CD8-positive, alpha-beta memory T cell (primary cell): ENCODE measurements at regions of chr3 and their contacts with region 1.

Region 1: DNA sequence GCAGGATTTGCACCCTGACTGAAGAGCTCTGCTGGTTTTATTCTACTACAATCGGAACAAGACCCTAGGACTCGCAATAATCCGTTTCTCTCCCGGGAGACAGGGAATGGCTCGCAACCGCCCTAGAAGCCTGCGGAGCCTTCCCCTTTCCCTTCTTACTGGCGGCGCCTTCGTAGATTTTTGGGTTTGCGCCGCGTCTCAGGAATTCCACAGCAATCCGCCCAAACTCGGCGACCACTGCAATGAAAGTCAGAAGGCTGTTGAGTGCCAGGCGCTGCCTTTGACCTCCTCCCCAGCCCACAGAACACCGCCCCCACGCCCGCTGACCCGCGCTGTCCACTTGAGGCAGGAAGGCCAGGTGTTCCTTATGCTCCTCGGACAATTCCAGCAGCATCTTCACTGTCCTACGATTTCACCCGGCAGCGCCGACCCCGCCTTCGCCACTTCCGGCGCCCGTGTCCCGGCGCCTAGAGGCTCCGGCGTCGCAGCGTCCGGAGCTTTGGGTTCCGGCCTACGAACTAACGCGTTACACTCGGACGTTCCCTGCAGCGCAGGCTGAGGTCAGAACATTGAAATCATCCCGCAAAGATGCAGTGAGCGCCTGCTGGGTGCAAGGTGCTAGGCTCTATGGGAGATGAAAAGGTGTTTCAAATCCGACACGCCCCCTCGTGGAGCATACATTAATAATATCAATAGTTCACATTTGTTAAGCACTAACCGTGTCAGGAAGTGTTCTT is at the start of gene COMMD2:
- DNase-seq: peak; percentile 56 to 75 (median 65)
- H3K4me3 ChIP-seq: peak within 1 kb of the TSS; percentile 75
- H3K4me3 Mint-ChIP-seq: peak within 1 kb of the TSS; percentile 92 to 100 (median 95)
- H3K27ac ChIP-seq: peak within 1 kb of the TSS; percentile 71
- H3K27ac Mint-ChIP-seq: peak within 1 kb of the TSS; percentile 93 to 99 (median 95)
- H3K4me1 ChIP-seq: peaks cover 21% of the 10 kb centered on the region
- H3K4me1 Mint-ChIP-seq: peaks cover 33 to 57% (median 46%) of the 10 kb centered on the region in 3 donors
- H3K27me3 ChIP-seq: no peaks in the 10 kb centered on the region
- H3K27me3 Mint-ChIP-seq: no peaks in the 10 kb centered on the region
- total RNA-seq, gene COMMD2: 42.4 to 48.4 TPM

Region 2: GRCh38 chr3:148344522-148344921 is 1407.7 kb before region 1 on chr3:
- CTCF ChIA-PET with region 1: no interaction called
- POLR2A ChIA-PET with region 1: no interaction called
- DNase-seq: no peak
- H3K4me3 ChIP-seq: no peak overlapping the region
- H3K4me3 Mint-ChIP-seq: no peak overlapping the region
- H3K27ac ChIP-seq: no peak overlapping the region
- H3K27ac Mint-ChIP-seq: no peak overlapping the region
- H3K4me1 ChIP-seq: no peaks in the 10 kb centered on the region
- H3K4me1 Mint-ChIP-seq: no peaks in the 10 kb centered on the region
- H3K27me3 ChIP-seq: no peaks in the 10 kb centered on the region
- H3K27me3 Mint-ChIP-seq: no peaks in the 10 kb centered on the region

Region 3: DNA sequence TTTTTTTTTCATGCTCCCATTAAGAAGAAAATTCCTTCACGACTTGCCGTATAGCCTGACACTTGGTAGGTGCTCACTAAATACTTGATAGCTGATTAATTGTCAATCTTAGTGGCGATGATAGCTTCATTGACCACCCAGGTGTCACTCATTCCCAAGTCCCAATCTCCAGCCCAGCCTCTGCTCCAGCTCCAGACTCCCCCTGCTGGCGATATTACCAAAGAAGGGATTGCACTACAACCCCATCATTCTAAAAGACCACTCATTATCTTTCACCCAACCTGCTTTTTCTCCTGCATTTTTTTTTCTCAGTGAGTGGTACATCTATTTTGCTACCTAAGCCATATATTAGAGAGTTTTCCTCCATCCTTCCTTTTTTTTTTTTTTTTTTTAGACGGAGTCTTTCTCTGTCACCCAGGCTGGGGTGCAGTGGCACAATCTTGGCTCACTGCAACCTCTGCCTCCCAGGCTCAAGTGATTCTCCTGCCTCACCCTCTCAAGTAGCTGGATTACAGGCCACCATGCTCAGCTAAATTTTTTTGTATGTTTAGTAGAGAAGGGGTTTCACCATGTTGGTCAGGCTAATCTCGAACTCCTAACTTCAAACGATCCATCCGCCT is 19.5 kb after region 1 on chr3:
- CTCF ChIA-PET with region 1: interaction called, 11 read pairs
- POLR2A ChIA-PET with region 1: no interaction called
- DNase-seq: peak; percentile 10 to 46 (median 14)
- H3K4me3 ChIP-seq: no peak overlapping the region
- H3K4me3 Mint-ChIP-seq: no peak overlapping the region
- H3K27ac ChIP-seq: no peak overlapping the region
- H3K27ac Mint-ChIP-seq: no peak overlapping the region
- H3K4me1 ChIP-seq: no peaks in the 10 kb centered on the region
- H3K4me1 Mint-ChIP-seq: no peaks in the 10 kb centered on the region
- H3K27me3 ChIP-seq: no peaks in the 10 kb centered on the region
- H3K27me3 Mint-ChIP-seq: peaks cover 2 to 18% of the 10 kb centered on the region in 2 donors